ENCODE measurements at regions of chr15 and their contacts with region 1.

Region 1: GRCh38 chr15:85475317-85475701 is 94.9 kb downstream of the AKAP13 start:
- DNase-seq: no peak
- H3K4me3 ChIP-seq: no peak overlapping the region
- CTCF ChIP-seq: no peak

Region 2: GRCh38 chr15:85485956-85486567 is 10.8 kb after region 1 on chr15:
- CTCF ChIA-PET with region 1: interaction called, 17 read pairs
- POLR2A ChIA-PET with region 1: no interaction called
- DNase-seq: no peak
- H3K4me3 ChIP-seq: no peak overlapping the region
- CTCF ChIP-seq: peak; percentile 65